ENCODE measurements at regions of chr3 and their contacts with region 1.

Region 1: GRCh38 chr3:169615833-169616232 is 47.7 kb downstream of the MECOM start:
- DNase-seq: no peak
- ATAC-seq: no peak
- H3K4me3 ChIP-seq: no peak overlapping the region
- H3K27ac ChIP-seq: no peak overlapping the region
- H3K4me1 ChIP-seq: peaks cover 0 to 27% (median 6%) of the 10 kb centered on the region in 9 donors
- H3K27me3 ChIP-seq: no peaks in the 10 kb centered on the region
- CTCF ChIP-seq: no peak

Region 2: GRCh38 chr3:169575373-169575772 is 40.5 kb before region 1 on chr3:
- intact Hi-C with region 1: loop called in 1 of 10 experiments (anchors 2 kb)
- DNase-seq: peak in 1 of 2 donors; percentile 24
- ATAC-seq: peak in 7 of 8 donors; percentile 19 to 73 (median 41)
- H3K4me3 ChIP-seq: no peak overlapping the region
- H3K27ac ChIP-seq: peak overlapping the region in 3 of 10 donors; percentile 16 to 36 (median 29)
- H3K4me1 ChIP-seq: peaks cover 0 to 19% (median 10%) of the 10 kb centered on the region in 9 donors
- H3K27me3 ChIP-seq: no peaks in the 10 kb centered on the region
- CTCF ChIP-seq: no peak

Measured in heart right ventricle (tissue), 16 donors.